ENCODE measurements at regions of chr4 and their contacts with region 1.

Region 1: DNA sequence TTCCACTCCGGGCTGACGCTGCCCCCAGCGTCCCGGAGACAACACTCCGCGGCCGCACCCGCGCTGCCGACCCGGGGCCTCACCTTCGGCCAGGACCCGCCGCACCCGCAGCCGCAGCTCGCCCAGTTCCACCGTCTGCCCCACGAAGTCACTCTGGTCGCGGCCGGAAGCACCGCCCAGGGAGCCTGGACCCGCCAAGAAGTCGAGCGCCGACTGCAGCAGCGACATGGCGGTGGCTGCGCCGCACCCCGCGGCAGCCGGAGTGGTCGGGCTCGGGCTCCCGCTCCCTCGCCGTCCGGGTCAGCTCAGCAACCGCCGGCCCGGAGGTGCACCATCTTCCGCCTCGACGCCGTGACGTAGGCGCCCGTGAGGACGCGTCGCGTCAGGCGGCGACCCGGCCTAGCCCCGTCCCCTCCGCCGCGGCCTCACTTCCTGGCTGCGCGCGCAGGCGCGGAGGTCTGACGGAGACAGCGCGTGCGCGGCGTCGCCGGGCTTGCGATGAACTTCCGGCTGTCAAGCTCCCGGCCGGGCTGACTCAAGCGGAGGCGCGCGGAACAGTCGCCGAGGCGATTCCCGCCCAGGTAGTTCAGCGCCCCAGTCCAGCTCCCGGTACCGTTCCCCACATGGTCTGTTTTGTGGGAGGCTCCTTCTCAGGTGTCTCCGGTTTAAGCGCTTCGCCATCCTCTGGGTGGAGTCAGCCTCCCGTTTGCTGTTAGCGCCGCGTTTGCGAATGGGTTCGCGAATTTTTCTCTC is at the starts of genes GAK and TMEM175:
- DNase-seq: peak; percentile 99
- H3K4me3 ChIP-seq: peak within 1 kb of the TSS; percentile 92 to 98 (median 92)
- H3K27ac ChIP-seq: peak within 1 kb of the TSS; percentile 95 to 99 (median 98)
- H3K4me1 ChIP-seq: peaks cover 43 to 58% (median 55%) of the 10 kb centered on the region in 4 donors
- H3K27me3 ChIP-seq: no peaks in the 10 kb centered on the region
- CTCF ChIP-seq: peak in 1 of 7 experiments; percentile 33
- EP300 ChIP-seq: no peak
- POLR2A ChIP-seq: peak in 2 of 4 donors; percentile 33 to 39
- total RNA-seq, gene GAK: 71.8 to 503 (median 194) TPM
- total RNA-seq, gene TMEM175: 7.3 to 82.8 (median 20.1) TPM

Region 2: GRCh38 chr4:973431-974397 is 41.6 kb after region 1 on chr4 and contains the start of gene DGKQ:
- intact Hi-C with region 1: loop called (anchors 5 kb)
- DNase-seq: peak; percentile 90 to 94
- H3K4me3 ChIP-seq: peak within 1 kb of the TSS; percentile 75 to 98 (median 78)
- H3K27ac ChIP-seq: peak within 1 kb of the TSS in 3 of 5 donors; percentile 43 to 76 (median 58)
- H3K4me1 ChIP-seq: peaks cover 27 to 46% (median 38%) of the 10 kb centered on the region in 4 donors
- H3K27me3 ChIP-seq: peaks cover 0 to 4% (median 0%) of the 10 kb centered on the region in 3 donors
- CTCF ChIP-seq: no peak
- EP300 ChIP-seq: no peak
- POLR2A ChIP-seq: no peak
- total RNA-seq, gene DGKQ: 5.8 to 176 (median 8.8) TPM

Region 3: DNA sequence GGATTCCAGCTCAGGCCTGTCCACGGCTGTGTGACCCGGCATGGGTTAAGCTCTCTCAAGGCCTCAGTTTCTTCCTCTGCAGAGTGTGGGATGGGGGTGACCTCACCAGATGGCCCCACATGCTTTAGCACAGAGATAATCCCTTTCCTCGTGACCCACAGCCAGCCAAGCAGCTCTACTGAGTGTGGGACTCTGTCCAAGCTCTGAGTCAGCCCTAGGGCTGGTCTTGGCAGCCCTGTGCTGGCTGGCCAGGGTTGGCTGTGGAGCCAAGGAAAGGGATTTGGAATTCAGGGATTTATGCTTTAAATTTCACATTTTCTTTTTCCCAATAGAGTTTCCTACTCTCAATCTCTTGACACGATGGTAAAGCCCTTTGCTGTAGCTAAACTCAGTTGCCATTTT is 260.0 kb after region 1 on chr4:
- intact Hi-C with region 1: no loop called
- DNase-seq: peak; percentile 91 to 96
- H3K4me3 ChIP-seq: no peak overlapping the region
- H3K27ac ChIP-seq: peak overlapping the region; percentile 75 to 95 (median 87)
- H3K4me1 ChIP-seq: peaks cover 33 to 51% (median 45%) of the 10 kb centered on the region in 4 donors
- H3K27me3 ChIP-seq: no peaks in the 10 kb centered on the region
- CTCF ChIP-seq: no peak
- EP300 ChIP-seq: no peak
- POLR2A ChIP-seq: no peak